ENCODE measurements at regions of chr4 and their contacts with region 1.

Region 1: GRCh38 chr4:88456757-88457306 is at the start of gene HERC5:
- DNase-seq: peak; percentile 84
- ATAC-seq: peak; percentile 96
- H3K4me3 Mint-ChIP-seq: peak within 1 kb of the TSS; percentile 100
- H3K27ac Mint-ChIP-seq: peak within 1 kb of the TSS; percentile 99
- H3K4me1 Mint-ChIP-seq: peaks cover 17% of the 10 kb centered on the region
- H3K27me3 Mint-ChIP-seq: no peaks in the 10 kb centered on the region
- CTCF ChIP-seq: no peak
- total RNA-seq, gene HERC5: 4.2 and 4.8 TPM in 2 replicates

Region 2: GRCh38 chr4:87390891-87391575 is 1065.8 kb before region 1 on chr4 and contains the start of gene HSD17B11:
- CTCF ChIA-PET with region 1: no interaction called
- POLR2A ChIA-PET with region 1: no interaction called
- intact Hi-C with region 1: loop called (anchors 10 kb)
- DNase-seq: peak; percentile 70
- ATAC-seq: peak; percentile 99
- H3K4me3 Mint-ChIP-seq: peak within 1 kb of the TSS; percentile 97
- H3K27ac Mint-ChIP-seq: peak within 1 kb of the TSS; percentile 96
- H3K4me1 Mint-ChIP-seq: peaks cover 48% of the 10 kb centered on the region
- H3K27me3 Mint-ChIP-seq: no peaks in the 10 kb centered on the region
- CTCF ChIP-seq: no peak
- total RNA-seq, gene HSD17B11: 26.2 and 28.4 TPM in 2 replicates

Region 3: GRCh38 chr4:88007304-88008121 is 449.3 kb before region 1 on chr4 and contains the start of gene PKD2:
- CTCF ChIA-PET with region 1: no interaction called
- POLR2A ChIA-PET with region 1: no interaction called
- intact Hi-C with region 1: loop called (anchors 5 kb)
- DNase-seq: peak; percentile 61
- ATAC-seq: peak; percentile 94
- H3K4me3 Mint-ChIP-seq: peak within 1 kb of the TSS; percentile 87
- H3K27ac Mint-ChIP-seq: peak within 1 kb of the TSS; percentile 47
- H3K4me1 Mint-ChIP-seq: peaks cover 23% of the 10 kb centered on the region
- H3K27me3 Mint-ChIP-seq: peaks cover 4% of the 10 kb centered on the region
- CTCF ChIP-seq: no peak
- total RNA-seq, gene PKD2: 4.2 and 6.2 TPM in 2 replicates

Region 4: GRCh38 chr4:88275516-88275915 is 181.3 kb before region 1 on chr4:
- CTCF ChIA-PET with region 1: no interaction called
- POLR2A ChIA-PET with region 1: interaction called, 9 read pairs
- intact Hi-C with region 1: loop called (anchors 2 kb)
- DNase-seq: no peak
- ATAC-seq: peak; percentile 93
- H3K4me3 Mint-ChIP-seq: peak overlapping the region; percentile 59
- H3K27ac Mint-ChIP-seq: peak overlapping the region; percentile 79
- H3K4me1 Mint-ChIP-seq: peaks cover 72% of the 10 kb centered on the region
- H3K27me3 Mint-ChIP-seq: no peaks in the 10 kb centered on the region
- CTCF ChIP-seq: no peak

Region 5: GRCh38 chr4:88320780-88321373 is 136.0 kb before region 1 on chr4:
- CTCF ChIA-PET with region 1: no interaction called
- POLR2A ChIA-PET with region 1: interaction called, 18 read pairs
- intact Hi-C with region 1: loop called (anchors 1 kb)
- DNase-seq: peak; percentile 33
- ATAC-seq: peak; percentile 99
- H3K4me3 Mint-ChIP-seq: peak overlapping the region; percentile 80
- H3K27ac Mint-ChIP-seq: peak overlapping the region; percentile 97
- H3K4me1 Mint-ChIP-seq: peaks cover 35% of the 10 kb centered on the region
- H3K27me3 Mint-ChIP-seq: no peaks in the 10 kb centered on the region
- CTCF ChIP-seq: no peak

Region 6: DNA sequence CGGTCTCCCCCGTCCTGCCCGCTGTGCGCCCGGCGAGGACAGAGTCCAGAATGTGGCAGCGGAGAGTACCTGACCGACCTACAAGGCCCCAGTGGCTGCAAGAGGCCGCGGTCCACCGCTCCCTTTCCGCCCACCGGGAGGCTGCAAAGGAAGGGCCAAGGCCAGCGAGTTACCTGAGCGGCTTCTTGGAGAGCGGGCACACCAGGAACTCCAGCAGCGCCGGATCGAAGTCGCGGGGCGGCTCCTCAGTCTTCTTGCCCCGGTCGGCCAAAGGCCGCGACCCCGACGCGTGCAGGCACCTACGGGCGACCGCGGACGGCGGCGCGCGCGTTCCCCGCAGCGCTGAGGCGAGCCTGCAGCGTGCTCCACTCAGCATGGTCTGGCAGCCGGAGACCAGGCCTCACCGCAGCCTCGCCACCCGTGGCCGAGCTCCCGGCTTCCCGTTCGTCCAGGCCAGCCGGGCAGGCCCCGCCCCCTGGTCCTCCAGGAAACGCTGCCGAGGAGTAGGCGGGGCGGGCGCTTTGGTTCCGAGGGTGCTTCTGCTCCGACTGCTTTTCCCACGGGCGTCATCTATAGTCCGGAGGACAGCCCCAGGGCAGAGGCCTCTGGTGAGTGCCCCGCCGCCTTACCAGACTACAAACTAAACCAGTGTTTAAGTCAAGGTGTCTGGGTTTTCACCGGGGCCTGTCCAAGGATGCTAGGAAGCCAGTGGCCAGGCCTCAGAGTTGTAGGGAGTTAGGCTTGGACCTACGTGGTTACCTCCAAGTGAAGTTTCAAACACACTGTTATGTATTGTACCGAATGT is 66.7 kb after region 1 on chr4 and contains the start of gene PYURF:
- CTCF ChIA-PET with region 1: no interaction called
- POLR2A ChIA-PET with region 1: interaction called, 10 read pairs
- intact Hi-C with region 1: loop called (anchors 2 kb)
- DNase-seq: peak; percentile 72
- ATAC-seq: peak; percentile 84
- H3K4me3 Mint-ChIP-seq: peak within 1 kb of the TSS; percentile 95
- H3K27ac Mint-ChIP-seq: peak within 1 kb of the TSS; percentile 85
- H3K4me1 Mint-ChIP-seq: peaks cover 18% of the 10 kb centered on the region
- H3K27me3 Mint-ChIP-seq: no peaks in the 10 kb centered on the region
- CTCF ChIP-seq: no peak
- total RNA-seq, gene PYURF: 42.2 and 48.3 TPM in 2 replicates

Measured in activated B cell treated with CpG ODN at 0.5 μM for 24 hours (primary cell).